Mammary epithelial cell (primary cell): ENCODE measurements at regions of chr15 and their contacts with region 1.

Region 1: DNA sequence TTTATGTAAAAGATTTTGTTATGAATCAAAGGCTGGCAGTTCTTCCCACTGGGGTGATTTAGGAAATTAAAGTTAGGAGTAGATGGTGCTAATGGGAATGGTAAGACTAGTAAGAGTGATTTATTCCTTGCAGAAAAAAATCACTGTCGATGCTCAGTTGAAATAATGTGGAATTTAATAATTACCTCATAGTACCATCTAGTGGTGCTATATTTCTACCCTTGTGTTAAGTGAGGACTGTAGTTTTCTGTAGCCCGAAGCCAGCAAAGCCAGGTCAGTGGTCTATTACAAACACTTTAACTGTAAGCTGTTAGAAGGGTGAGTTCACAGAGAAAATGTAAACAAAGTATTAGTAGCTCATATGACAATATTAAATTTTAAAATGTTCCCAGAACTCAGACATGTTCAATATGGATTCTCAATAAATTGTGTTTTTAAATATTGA is 39.5 kb upstream of the GOLGA8J start:
- DNase-seq: no peak
- H3K4me3 ChIP-seq: no peak overlapping the region
- H3K27ac ChIP-seq: no peak overlapping the region
- H3K4me1 ChIP-seq: no peaks in the 10 kb centered on the region
- H3K27me3 ChIP-seq: no peaks in the 10 kb centered on the region
- CTCF ChIP-seq: peak; percentile 23 to 45

Region 2: GRCh38 chr15:29668120-29668602 is 375.1 kb before region 1 on chr15:
- CTCF ChIA-PET with region 1: no interaction called
- dilution Hi-C with region 1: no loop called
- in situ Hi-C with region 1: no loop called
- intact Hi-C with region 1: loop called (anchors 1 kb)
- DNase-seq: peak; percentile 62
- H3K4me3 ChIP-seq: no peak overlapping the region
- H3K27ac ChIP-seq: no peak overlapping the region
- H3K4me1 ChIP-seq: peaks cover 22% of the 10 kb centered on the region
- H3K27me3 ChIP-seq: no peaks in the 10 kb centered on the region
- CTCF ChIP-seq: peak; percentile 45 to 54

Region 3: DNA sequence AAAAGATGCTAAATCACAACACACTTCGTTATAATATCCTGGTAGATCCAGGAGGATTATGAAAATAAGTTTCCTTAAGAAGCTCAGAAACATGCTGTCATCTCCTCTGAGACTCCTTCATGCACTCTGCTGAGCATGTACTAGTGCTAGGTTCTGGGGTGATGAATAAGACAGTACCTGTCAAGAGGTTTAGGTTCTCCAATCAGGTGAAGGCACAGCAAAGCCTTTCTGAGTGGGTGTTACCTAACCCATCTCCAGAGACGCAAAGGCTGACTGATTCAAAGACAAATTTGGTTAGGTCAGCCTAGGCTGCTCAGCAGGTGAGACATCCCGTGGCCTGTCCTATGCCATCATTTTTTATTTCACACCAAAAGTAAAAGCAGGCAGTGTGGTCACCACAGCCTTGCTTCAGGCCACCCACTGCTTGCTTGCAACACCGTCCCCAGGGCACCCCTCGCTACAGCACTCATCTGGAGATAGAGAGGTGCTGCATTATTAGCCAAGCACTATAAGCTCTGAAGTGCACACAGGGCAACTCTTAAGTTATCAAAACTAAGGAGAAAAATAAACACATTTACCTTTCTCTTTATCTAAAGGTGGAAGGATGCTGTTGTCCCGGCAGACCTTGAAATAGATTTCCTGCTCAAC is 338.2 kb before region 1 on chr15:
- CTCF ChIA-PET with region 1: no interaction called
- dilution Hi-C with region 1: no loop called
- in situ Hi-C with region 1: loop called in 1 of 2 experiments (anchors 25 kb)
- intact Hi-C with region 1: no loop called
- DNase-seq: no peak
- H3K4me3 ChIP-seq: no peak overlapping the region
- H3K27ac ChIP-seq: no peak overlapping the region
- H3K4me1 ChIP-seq: no peaks in the 10 kb centered on the region
- H3K27me3 ChIP-seq: no peaks in the 10 kb centered on the region
- CTCF ChIP-seq: no peak